Prostate gland (tissue), 2 donors: ENCODE measurements at regions of chr4 and their contacts with region 1.

Region 1: GRCh38 chr4:20251796-20252655 is at the start of gene SLIT2:
- DNase-seq: peak; percentile 78
- H3K4me3 ChIP-seq: peak within 1 kb of the TSS; percentile 52 to 56
- H3K27ac ChIP-seq: peak within 1 kb of the TSS; percentile 33 to 61
- H3K4me1 ChIP-seq: no peaks in the 10 kb centered on the region
- H3K27me3 ChIP-seq: peaks cover 4% of the 10 kb centered on the region
- CTCF ChIP-seq: peak in 1 of 4 experiments; percentile 12
- POLR2A ChIP-seq: peak; percentile 72
- total RNA-seq, gene SLIT2: 8.5 to 11.0 TPM

Region 2: DNA sequence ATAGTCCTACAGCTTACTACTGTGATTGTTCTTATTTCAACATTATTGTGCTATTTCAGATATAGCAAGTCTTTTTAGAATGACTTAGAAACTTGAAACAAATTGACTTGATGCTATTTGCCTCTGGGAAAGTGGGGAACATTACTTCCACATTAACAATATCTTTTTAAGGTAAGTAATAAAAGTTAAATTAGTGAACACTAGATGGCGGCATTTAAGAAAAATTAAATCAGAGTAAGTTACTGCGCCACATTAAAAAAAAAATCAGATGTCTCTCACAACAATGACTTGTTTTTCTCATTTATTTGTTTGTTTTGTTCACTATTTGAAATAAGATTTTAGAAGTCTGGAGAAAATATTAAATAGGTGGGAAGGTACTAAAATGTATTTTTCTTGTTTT is 1027.2 kb before region 1 on chr4:
- intact Hi-C with region 1: loop called (anchors 5 kb)
- DNase-seq: no peak
- H3K4me3 ChIP-seq: no peak overlapping the region
- H3K27ac ChIP-seq: no peak overlapping the region
- H3K4me1 ChIP-seq: no peaks in the 10 kb centered on the region
- H3K27me3 ChIP-seq: no peaks in the 10 kb centered on the region
- CTCF ChIP-seq: peak in 3 of 4 experiments; percentile 40 to 60 (median 44)
- POLR2A ChIP-seq: no peak

Region 3: DNA sequence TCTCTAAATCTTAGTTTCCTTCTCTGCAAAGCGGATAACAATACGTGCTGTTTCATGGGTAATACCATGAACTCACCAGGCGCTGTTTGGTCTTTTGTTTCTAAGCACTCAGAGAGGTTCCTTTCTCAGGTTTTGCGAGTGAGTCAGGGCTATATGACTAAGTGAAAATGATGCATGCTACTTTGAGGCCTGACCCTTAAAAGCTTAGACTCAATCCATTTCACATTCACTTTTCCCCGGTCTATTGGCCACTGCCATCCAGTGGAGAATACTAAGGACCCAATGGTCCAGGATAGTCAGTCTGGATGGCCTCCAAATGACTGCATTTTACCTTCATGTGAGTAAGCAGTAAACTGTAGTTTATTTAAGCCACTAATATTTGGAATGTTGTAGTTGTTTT is 401.1 kb before region 1 on chr4:
- intact Hi-C with region 1: no loop called
- DNase-seq: no peak
- H3K4me3 ChIP-seq: no peak overlapping the region
- H3K27ac ChIP-seq: no peak overlapping the region
- H3K4me1 ChIP-seq: no peaks in the 10 kb centered on the region
- H3K27me3 ChIP-seq: no peaks in the 10 kb centered on the region
- CTCF ChIP-seq: no peak
- POLR2A ChIP-seq: no peak

Region 4: DNA sequence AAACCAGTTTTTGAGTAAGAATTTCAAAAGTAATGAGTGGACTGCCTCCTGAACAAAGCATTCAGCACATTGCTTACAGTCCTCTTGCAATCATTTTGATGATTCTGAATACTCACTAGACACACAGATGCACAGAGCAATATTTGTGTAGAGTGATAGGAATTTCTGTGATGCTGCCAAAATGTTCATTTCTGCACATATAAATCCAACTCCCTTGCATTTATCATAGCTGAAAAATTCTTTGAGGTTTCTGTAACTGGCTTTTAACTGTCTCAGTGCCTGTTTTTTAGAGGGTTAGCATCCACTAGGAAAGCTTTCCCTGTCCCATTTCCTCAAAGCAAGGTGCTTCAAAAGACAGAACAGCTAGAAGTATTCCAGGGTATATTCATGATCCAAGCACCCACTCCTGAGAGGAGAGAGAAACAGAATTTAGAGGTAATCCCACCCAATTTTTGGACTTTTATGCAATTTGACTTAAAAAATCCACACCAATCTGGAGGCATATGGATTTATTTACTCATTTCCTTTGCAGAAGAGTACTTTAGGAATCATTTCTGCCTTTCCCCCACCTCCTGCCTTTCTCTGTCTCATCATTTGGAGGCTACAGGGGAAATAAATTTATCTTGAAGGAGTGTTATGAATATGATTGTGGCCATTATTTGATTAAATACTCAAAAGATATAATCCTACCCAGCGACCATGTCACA is 234.8 kb before region 1 on chr4:
- intact Hi-C with region 1: no loop called
- DNase-seq: no peak
- H3K4me3 ChIP-seq: no peak overlapping the region
- H3K27ac ChIP-seq: no peak overlapping the region
- H3K4me1 ChIP-seq: no peaks in the 10 kb centered on the region
- H3K27me3 ChIP-seq: no peaks in the 10 kb centered on the region
- CTCF ChIP-seq: no peak
- POLR2A ChIP-seq: no peak

Region 5: DNA sequence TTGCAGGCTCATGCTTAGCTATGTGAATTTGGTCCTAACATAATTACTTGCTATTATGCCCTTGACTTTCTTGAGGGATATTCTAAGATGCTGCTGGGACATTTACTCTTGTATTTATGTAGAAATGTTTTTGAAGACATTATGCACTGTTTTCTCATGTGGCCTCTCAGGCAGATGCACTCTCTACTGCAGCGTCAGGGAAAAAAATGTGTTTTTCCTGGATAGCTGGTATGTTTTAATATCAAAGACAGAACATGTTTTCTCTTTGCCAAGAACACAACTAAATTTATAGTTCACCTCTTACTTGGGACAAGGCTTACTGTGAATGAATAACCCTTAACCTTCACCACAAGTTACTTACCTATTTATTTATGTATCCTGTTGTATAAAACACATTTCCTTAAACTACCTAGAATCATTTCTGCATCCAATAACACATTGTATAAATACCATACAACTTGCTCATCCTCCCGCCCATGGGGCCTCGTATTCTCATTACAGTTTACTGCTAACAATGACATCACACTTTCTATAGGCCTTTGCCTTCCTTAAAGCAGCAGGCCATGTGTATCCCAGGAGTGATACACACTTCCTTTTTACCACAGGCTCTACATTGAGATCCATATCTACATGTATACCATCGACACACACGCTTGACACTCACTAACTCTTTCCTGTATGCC is 178.4 kb after region 1 on chr4:
- intact Hi-C with region 1: loop called (anchors 5 kb)
- DNase-seq: no peak
- H3K4me3 ChIP-seq: no peak overlapping the region
- H3K27ac ChIP-seq: no peak overlapping the region
- H3K4me1 ChIP-seq: no peaks in the 10 kb centered on the region
- H3K27me3 ChIP-seq: no peaks in the 10 kb centered on the region
- CTCF ChIP-seq: no peak
- POLR2A ChIP-seq: no peak

Region 6: GRCh38 chr4:20544645-20545044 is 292.6 kb after region 1 on chr4:
- intact Hi-C with region 1: loop called (anchors 5 kb)
- DNase-seq: no peak
- H3K4me3 ChIP-seq: no peak overlapping the region
- H3K27ac ChIP-seq: no peak overlapping the region
- H3K4me1 ChIP-seq: no peaks in the 10 kb centered on the region
- H3K27me3 ChIP-seq: no peaks in the 10 kb centered on the region
- CTCF ChIP-seq: peak in 3 of 4 experiments; percentile 40 to 73 (median 67)
- POLR2A ChIP-seq: no peak